GM12878 (cell line): ENCODE measurements at regions of chr2 and their contacts with region 1.

Region 1: GRCh38 chr2:136378712-136379595 is 261.0 kb upstream of the CXCR4 start:
- DNase-seq: no peak
- ATAC-seq: peak; percentile 55
- H3K4me3 ChIP-seq: no peak overlapping the region
- H3K27ac ChIP-seq: no peak overlapping the region
- H3K4me1 ChIP-seq: peaks cover 51% of the 10 kb centered on the region
- H3K27me3 ChIP-seq: no peaks in the 10 kb centered on the region
- CTCF ChIP-seq: peak; percentile 85 to 92 (median 86)
- EP300 ChIP-seq: no peak
- POLR2A ChIP-seq: no peak
- RAD21 ChIP-seq: peak; percentile 96

Region 2: DNA sequence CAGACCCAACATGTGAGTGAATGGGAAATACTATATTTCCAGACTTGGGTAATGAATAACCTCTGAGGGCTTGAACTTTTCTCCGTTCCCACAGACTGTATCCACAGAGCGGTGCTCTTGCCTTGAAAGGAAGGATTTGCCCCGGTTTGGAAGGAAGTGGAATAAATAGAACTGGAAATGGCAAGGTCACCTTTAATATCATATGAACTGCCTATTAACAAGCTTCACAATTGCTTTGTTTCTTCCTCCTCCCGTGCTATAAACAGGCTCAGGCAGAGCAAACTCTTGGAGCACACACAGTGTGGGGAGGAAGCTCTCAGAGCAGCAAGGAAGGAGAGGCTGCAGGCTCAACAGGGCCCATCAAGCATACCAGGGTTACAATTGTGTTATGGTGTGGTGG is 365.0 kb before region 1 on chr2:
- CTCF ChIA-PET with region 1: interaction called, 12 read pairs
- POLR2A ChIA-PET with region 1: no interaction called
- RAD21 ChIA-PET with region 1: interaction called, 9 read pairs
- SMC1A ChIA-PET with region 1: interaction called, 18 read pairs
- in situ Hi-C with region 1: no loop called
- intact Hi-C with region 1: no loop called
- DNase-seq: no peak
- ATAC-seq: no peak
- H3K4me3 ChIP-seq: no peak overlapping the region
- H3K27ac ChIP-seq: no peak overlapping the region
- H3K4me1 ChIP-seq: peaks cover 3% of the 10 kb centered on the region; the same call in 1 of the 2 replicates
- H3K27me3 ChIP-seq: no peaks in the 10 kb centered on the region
- CTCF ChIP-seq: no peak
- EP300 ChIP-seq: no peak
- POLR2A ChIP-seq: no peak
- RAD21 ChIP-seq: no peak

Region 3: DNA sequence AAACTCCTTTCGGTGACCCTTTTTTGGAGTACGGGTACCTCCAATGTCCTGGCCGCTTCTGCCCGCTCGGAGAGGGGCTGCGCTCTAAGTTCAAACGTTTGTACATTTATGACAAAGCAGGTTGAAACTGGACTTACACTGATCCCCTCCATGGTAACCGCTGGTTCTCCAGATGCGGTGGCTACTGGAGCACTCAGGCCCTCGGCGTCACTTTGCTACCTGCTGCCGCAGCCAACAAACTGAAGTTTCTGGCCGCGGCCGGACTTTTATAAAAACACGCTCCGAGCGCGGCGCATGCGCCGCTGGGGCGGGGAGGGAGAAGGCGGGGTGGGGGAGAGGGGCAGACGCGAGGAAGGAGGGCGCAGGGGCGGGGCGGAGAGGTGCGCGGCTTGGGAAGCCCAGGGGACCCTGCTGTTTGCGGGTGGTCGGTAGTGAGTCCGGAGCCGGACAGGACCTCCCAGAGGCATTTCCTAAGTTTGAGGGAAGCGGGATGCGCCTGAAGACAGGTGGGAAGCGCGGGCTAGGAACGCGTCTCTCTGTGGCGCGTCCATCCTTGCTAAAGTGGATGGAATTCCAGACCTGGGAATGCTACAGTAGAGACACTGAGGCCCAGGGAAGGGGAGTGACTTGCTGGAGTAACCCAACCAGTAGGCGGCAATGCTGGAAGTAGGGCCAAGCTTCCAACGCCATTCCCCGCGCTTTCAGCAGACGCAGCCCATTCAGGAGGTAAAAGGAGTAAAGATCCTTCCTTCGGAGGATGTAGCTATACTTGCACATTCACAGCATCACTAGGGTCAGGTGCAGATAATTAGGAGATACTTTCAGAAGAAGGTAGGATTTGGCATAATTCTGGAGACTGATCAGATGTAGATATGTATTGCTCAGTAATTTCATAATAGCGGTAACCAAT is 260.8 kb before region 1 on chr2 and contains the start of gene CXCR4:
- CTCF ChIA-PET with region 1: interaction called, 7 read pairs
- POLR2A ChIA-PET with region 1: no interaction called
- RAD21 ChIA-PET with region 1: interaction called, 7 read pairs
- SMC1A ChIA-PET with region 1: interaction called, 26 read pairs
- in situ Hi-C with region 1: no loop called
- intact Hi-C with region 1: loop called (anchors 2 kb)
- DNase-seq: no peak
- ATAC-seq: peak; percentile 43
- H3K4me3 ChIP-seq: peak within 1 kb of the TSS; percentile 85
- H3K27ac ChIP-seq: peak within 1 kb of the TSS; percentile 40; the same call in 1 of the 2 replicates
- H3K4me1 ChIP-seq: peaks cover 2% of the 10 kb centered on the region; the same call in 1 of the 2 replicates
- H3K27me3 ChIP-seq: peaks cover 0 to 12% of the 10 kb centered on the region in 2 experiments
- CTCF ChIP-seq: peak in 1 of 3 experiments; percentile 19; a peak in 1 of 6 replicates
- EP300 ChIP-seq: no peak
- POLR2A ChIP-seq: peak; percentile 97
- RAD21 ChIP-seq: 0 out of 2 replicates have a peak, but pooled peaks have one; percentile 9
- polyA plus RNA-seq, gene CXCR4: 31.1 to 32.3 TPM

Region 4: DNA sequence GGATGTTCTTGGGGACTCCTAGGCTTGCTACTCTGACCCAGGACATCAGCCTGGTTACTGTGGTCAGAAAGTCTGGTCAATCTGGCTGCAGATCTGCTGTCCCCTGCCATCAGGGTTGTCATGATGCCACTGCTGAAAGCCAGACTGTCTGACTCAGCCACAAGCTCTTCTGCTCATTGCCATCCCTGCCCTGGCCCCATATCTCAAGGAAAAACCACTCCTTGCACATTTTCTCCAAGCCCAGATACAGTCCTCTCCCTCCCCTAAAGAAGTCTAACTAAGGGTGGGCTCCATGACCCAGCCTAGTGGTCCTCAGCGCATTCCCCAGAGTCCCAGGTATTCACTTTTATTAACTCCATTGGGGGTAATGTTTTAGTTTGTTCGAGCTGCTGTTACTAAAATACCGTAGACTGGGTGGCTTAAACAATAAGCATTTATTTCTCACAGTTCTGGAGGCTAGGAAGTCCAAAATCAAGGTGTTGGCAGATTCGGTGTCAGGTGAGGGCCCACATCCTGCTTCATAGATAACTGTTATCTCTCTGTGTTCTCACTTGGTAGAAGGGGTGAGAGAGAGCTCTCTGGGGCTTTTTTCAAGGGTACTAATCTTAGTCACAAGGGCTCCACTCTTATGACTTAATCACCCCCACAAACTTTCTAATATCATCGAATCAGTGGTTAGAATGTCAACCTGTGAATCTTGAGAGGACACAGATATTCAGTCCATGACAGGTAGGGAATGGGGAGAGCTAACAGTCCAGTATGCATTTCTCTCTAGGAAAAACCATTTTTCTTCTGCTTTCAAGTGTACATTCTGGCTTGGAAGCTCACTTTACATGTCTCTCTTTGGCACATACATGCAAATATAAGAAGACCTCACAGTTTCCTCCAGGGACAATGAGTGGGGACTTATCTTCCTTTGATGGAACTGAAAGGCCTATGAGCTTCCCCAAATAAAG is 166.3 kb before region 1 on chr2:
- CTCF ChIA-PET with region 1: interaction called, 8 read pairs
- POLR2A ChIA-PET with region 1: interaction called, 5 read pairs
- RAD21 ChIA-PET with region 1: interaction called, 37 read pairs
- SMC1A ChIA-PET with region 1: interaction called, 32 read pairs
- in situ Hi-C with region 1: no loop called
- intact Hi-C with region 1: loop called (anchors 2 kb)
- DNase-seq: peak; percentile 34
- ATAC-seq: peak; percentile 83
- H3K4me3 ChIP-seq: no peak overlapping the region
- H3K27ac ChIP-seq: no peak overlapping the region
- H3K4me1 ChIP-seq: peaks cover 4% of the 10 kb centered on the region
- H3K27me3 ChIP-seq: peaks cover 0 to 8% of the 10 kb centered on the region in 2 experiments; a peak in 2 of 4 replicates
- CTCF ChIP-seq: no peak
- EP300 ChIP-seq: peak in 1 of 2 experiments; percentile 78; a peak in 3 of 4 replicates
- POLR2A ChIP-seq: no peak
- RAD21 ChIP-seq: no peak

Region 5: GRCh38 chr2:136255648-136256463 is 123.1 kb before region 1 on chr2:
- CTCF ChIA-PET with region 1: interaction called, 27 read pairs
- POLR2A ChIA-PET with region 1: interaction called, 11 read pairs
- RAD21 ChIA-PET with region 1: interaction called, 45 read pairs
- SMC1A ChIA-PET with region 1: interaction called, 70 read pairs
- in situ Hi-C with region 1: no loop called
- intact Hi-C with region 1: loop called (anchors 2 kb)
- DNase-seq: no peak
- ATAC-seq: peak; percentile 78
- H3K4me3 ChIP-seq: no peak overlapping the region
- H3K27ac ChIP-seq: no peak overlapping the region
- H3K4me1 ChIP-seq: peaks cover 12% of the 10 kb centered on the region
- H3K27me3 ChIP-seq: no peaks in the 10 kb centered on the region; a peak in 1 of 4 replicates
- CTCF ChIP-seq: peak in 2 of 3 experiments; percentile 9 to 27; a peak in 3 of 6 replicates
- EP300 ChIP-seq: peak in 1 of 2 experiments; percentile 63; a peak in 1 of 4 replicates
- POLR2A ChIP-seq: no peak
- RAD21 ChIP-seq: no peak

Region 6: GRCh38 chr2:136319237-136319636 is 59.7 kb before region 1 on chr2:
- CTCF ChIA-PET with region 1: interaction called, 6 read pairs
- POLR2A ChIA-PET with region 1: no interaction called
- RAD21 ChIA-PET with region 1: interaction called, 3 read pairs
- SMC1A ChIA-PET with region 1: interaction called, 48 read pairs
- in situ Hi-C with region 1: no loop called
- intact Hi-C with region 1: loop called (anchors 5 kb)
- DNase-seq: no peak
- ATAC-seq: peak; percentile 81
- H3K4me3 ChIP-seq: no peak overlapping the region
- H3K27ac ChIP-seq: no peak overlapping the region
- H3K4me1 ChIP-seq: peaks cover 5% of the 10 kb centered on the region; the same call in 1 of the 2 replicates
- H3K27me3 ChIP-seq: no peaks in the 10 kb centered on the region
- CTCF ChIP-seq: no peak
- EP300 ChIP-seq: no peak
- POLR2A ChIP-seq: no peak
- RAD21 ChIP-seq: no peak

Region 7: DNA sequence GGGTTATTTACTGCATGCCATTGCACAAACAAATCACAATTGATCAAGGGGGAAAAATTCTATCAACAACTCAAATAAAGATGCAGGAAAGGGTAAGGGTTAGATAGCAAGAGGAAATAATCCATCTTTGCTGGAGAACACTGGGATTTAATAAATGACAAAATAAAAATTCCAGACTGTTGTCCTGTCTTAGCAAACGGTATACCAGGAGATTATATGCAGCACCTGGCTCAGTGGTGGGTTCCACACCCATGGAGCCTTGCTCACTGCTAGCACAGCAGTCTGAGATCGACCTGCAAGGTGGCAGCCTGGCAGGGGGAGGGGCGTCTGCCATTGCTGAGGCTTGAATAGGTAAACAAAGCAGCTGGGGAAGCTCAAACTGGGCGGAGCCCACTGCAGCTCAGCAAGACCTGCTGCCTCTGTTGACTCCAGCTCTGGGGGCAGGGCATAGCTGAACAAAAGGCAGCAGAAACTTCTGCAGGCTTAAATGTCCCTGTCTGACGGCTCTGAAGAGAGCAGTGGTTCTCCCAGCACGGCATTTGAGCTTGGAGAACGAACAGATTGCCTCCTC is 89.9 kb after region 1 on chr2:
- CTCF ChIA-PET with region 1: no interaction called
- POLR2A ChIA-PET with region 1: no interaction called
- RAD21 ChIA-PET with region 1: no interaction called
- SMC1A ChIA-PET with region 1: no interaction called
- in situ Hi-C with region 1: no loop called
- intact Hi-C with region 1: no loop called
- DNase-seq: no peak
- ATAC-seq: no peak
- H3K4me3 ChIP-seq: no peak overlapping the region
- H3K27ac ChIP-seq: no peak overlapping the region
- H3K4me1 ChIP-seq: no peaks in the 10 kb centered on the region
- H3K27me3 ChIP-seq: no peaks in the 10 kb centered on the region; a peak in 2 of 4 replicates
- CTCF ChIP-seq: no peak
- EP300 ChIP-seq: no peak
- POLR2A ChIP-seq: no peak
- RAD21 ChIP-seq: no peak